ENCODE measurements at regions of chr12 and their contacts with region 1.

Region 1: GRCh38 chr12:117874842-117875434 is 93.9 kb downstream of the KSR2 start:
- DNase-seq: peak; percentile 65 to 96 (median 80)

Region 2: DNA sequence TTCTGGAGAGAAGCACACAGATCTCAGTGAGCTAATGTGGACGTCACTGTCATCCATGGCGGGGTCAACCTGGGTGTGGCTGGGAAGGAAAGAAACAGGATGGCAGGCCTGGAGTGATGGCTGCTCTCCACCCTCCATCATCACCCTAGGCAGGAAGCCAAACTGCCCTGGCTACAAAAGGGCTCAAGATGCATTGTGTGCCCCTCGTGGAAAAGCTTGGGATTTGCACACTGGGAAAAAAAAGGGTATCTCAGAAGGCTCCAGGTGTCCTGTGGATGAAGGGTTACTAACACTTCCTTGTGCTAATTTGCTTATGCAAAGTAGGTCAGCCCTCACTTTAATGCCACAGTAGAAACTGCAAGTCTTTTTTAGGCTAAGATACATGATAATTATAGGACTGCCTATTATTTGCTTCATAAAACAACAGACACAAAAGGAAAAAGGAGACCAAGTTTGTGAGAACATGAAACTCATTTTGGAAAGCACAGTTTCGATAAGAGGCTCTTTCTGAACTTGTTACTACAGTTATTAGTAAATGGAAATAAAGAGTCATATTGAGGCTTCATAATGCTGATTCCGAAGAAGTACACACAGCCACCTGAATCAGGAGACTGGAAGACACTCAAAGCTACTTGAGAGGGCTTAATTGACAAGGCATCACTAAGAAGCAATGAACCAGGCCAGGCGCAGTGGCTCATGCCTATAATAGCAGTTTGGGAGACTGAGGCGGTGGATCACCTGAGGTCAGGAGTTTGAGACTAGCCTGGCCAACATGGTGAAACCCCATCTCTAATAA is 160.5 kb after region 1 on chr12:
- intact Hi-C with region 1: loop called (anchors 1 kb)
- DNase-seq: no peak